PC-3 (cell line): ENCODE measurements at regions of chr11 and their contacts with region 1.

Region 1: GRCh38 chr11:65274735-65275682 is 13.2 kb downstream of the POLA2 start:
- DNase-seq: peak; percentile 96
- ATAC-seq: peak; percentile 66
- H3K4me3 ChIP-seq: no peak overlapping the region
- H3K27ac ChIP-seq: peak overlapping the region; percentile 64
- H3K4me1 ChIP-seq: peaks cover 47% of the 10 kb centered on the region
- H3K27me3 ChIP-seq: no peaks in the 10 kb centered on the region
- CTCF ChIP-seq: peak; percentile 94

Region 2: DNA sequence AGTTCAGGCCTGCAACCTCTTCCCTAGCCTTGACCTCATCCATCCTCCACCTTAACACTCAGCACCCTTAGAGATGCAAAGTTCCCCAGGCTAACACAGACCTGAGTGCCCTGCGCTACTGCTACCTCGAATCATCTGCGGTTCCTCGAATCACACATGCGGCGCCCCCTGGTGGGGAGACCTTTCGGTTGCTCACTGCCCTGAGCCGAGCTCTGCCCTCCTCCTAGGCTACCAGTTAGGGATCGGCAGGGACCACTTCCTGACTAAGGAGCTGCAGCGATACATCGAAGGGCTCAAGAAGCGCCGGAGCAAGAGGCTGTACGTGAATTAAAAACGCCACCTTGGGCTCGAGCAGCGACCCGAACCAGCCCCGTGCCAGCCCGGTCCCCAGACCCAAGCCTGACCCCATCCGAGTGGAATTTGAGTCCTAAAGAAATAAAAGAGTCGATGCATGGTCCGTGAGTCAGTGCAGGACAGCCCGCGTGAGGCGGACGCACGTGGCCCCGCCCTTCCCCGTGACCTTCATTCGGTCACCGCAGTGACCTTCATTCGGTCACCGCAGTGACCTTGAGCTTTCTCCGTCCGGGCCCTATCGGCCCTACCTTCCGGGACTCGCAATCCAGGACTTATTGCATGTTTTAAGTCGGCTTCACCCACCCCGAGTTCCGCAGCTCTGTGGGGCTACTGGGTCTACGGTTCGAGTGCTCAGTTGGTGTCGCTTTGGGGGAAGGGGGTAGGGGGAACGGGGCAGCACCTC is 970.5 kb before region 1 on chr11:
- CTCF ChIA-PET with region 1: interaction called, 13 read pairs
- POLR2A ChIA-PET with region 1: no interaction called
- intact Hi-C with region 1: no loop called
- DNase-seq: peak; percentile 95
- ATAC-seq: peak; percentile 30
- H3K4me3 ChIP-seq: peak overlapping the region; percentile 74
- H3K27ac ChIP-seq: peak overlapping the region; percentile 85
- H3K4me1 ChIP-seq: peaks cover 35% of the 10 kb centered on the region
- H3K27me3 ChIP-seq: peaks cover 12% of the 10 kb centered on the region
- CTCF ChIP-seq: peak; percentile 99

Region 3: DNA sequence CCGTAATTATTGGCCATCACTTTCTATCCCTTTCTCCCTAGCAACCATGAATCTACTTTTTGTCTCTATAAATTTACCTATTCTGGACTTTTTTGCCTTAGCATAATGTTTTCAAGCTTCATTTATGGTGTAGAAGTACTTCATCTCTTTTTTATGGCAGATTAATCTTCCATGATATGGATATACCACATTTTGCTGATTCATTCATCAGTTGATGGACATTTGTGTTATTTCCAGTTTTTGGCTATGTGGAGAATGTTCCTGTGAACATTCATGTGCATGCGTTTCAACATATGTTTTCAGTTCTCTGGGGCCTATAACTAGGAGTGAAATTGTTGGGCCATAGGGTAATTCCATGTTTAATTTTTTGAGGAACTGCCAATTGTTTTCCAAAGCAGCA is 80.4 kb before region 1 on chr11:
- CTCF ChIA-PET with region 1: interaction called, 15 read pairs
- POLR2A ChIA-PET with region 1: no interaction called
- intact Hi-C with region 1: no loop called
- DNase-seq: no peak
- ATAC-seq: no peak
- H3K4me3 ChIP-seq: no peak overlapping the region
- H3K27ac ChIP-seq: no peak overlapping the region
- H3K4me1 ChIP-seq: no peaks in the 10 kb centered on the region
- H3K27me3 ChIP-seq: no peaks in the 10 kb centered on the region
- CTCF ChIP-seq: no peak

Region 4: GRCh38 chr11:65301491-65302329 is 26.7 kb after region 1 on chr11:
- CTCF ChIA-PET with region 1: interaction called, 25 read pairs
- POLR2A ChIA-PET with region 1: no interaction called
- intact Hi-C with region 1: no loop called
- DNase-seq: no peak
- ATAC-seq: peak; percentile 54
- H3K4me3 ChIP-seq: no peak overlapping the region
- H3K27ac ChIP-seq: no peak overlapping the region
- H3K4me1 ChIP-seq: no peaks in the 10 kb centered on the region
- H3K27me3 ChIP-seq: no peaks in the 10 kb centered on the region
- CTCF ChIP-seq: no peak

Region 5: GRCh38 chr11:65354265-65355012 is 79.4 kb after region 1 on chr11 and contains the start of gene TIGD3:
- CTCF ChIA-PET with region 1: interaction called, 28 read pairs
- POLR2A ChIA-PET with region 1: no interaction called
- intact Hi-C with region 1: no loop called
- DNase-seq: peak; percentile 98
- ATAC-seq: peak; percentile 97
- H3K4me3 ChIP-seq: peak within 1 kb of the TSS; percentile 72
- H3K27ac ChIP-seq: no peak within 1 kb of the TSS
- H3K4me1 ChIP-seq: peaks cover 7% of the 10 kb centered on the region
- H3K27me3 ChIP-seq: no peaks in the 10 kb centered on the region
- CTCF ChIP-seq: no peak
- total RNA-seq, gene TIGD3: 1.3 and 1.6 TPM in 2 replicates

Region 6: GRCh38 chr11:66022401-66023185 is 747.6 kb after region 1 on chr11:
- CTCF ChIA-PET with region 1: interaction called, 16 read pairs
- POLR2A ChIA-PET with region 1: no interaction called
- intact Hi-C with region 1: no loop called
- DNase-seq: peak; percentile 84
- ATAC-seq: peak; percentile 75
- H3K4me3 ChIP-seq: peak overlapping the region; percentile 51
- H3K27ac ChIP-seq: no peak overlapping the region
- H3K4me1 ChIP-seq: peaks cover 24% of the 10 kb centered on the region
- H3K27me3 ChIP-seq: no peaks in the 10 kb centered on the region
- CTCF ChIP-seq: peak; percentile 98